Activated CD4-positive, alpha-beta memory T cell treated with anti-CD3 and anti-CD28 coated beads, Interleukin-2, amount 10 ng/mL, durations not matched to agents 7 days and 5 days (primary cell): ENCODE measurements at regions of chr19 and their contacts with region 1.

Region 1: DNA sequence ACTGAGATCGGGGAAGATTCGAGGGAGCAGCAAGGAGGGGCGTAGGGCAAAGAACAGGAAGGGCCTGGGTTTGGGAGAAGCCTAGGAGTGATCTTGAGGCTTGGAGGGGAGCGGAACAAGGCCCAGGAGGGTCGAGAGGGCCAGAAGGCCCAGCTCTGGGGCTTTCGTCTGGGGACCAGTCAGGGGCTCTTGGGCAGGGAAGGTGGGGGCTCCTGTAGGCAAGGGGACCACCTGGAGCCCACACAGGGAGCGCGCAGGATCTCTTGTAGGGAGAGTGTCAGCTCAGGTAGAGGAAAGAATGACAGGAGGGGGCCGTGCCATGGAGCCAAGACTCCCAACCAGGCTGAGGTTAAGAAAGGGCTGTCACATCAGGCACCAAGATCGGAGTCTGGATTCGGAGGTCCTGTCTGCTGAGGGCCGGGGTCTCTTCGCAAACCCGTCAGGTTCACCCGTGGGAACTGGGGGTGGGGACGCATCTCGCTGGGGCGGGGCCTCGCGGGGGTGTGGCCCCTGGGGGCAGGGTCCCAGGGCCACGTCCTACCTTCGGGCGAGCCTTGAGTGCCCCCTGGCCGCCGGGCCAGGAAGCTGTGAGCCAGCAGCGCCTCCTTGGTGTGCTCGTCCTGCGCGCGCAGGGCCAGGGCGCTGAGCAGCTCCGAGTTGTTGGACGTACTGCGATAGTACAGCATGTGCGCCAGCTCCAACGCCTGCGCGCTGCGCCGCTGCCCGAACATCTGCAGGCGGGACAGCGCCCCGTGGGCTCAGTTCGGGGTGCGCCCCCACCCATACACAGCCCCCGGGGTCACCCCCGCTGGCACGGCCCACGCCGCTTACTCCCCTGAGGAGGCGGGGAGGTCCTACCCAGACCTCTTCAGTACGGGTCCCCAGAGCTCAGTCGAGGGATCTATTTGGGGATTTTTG is 8.4 kb downstream of the EMP3 start:
- DNase-seq: peak; percentile 95
- H3K4me3 Mint-ChIP-seq: peak overlapping the region; percentile 96
- H3K27ac Mint-ChIP-seq: peak overlapping the region; percentile 95
- H3K4me1 Mint-ChIP-seq: peaks cover 53% of the 10 kb centered on the region
- H3K27me3 Mint-ChIP-seq: no peaks in the 10 kb centered on the region

Region 2: DNA sequence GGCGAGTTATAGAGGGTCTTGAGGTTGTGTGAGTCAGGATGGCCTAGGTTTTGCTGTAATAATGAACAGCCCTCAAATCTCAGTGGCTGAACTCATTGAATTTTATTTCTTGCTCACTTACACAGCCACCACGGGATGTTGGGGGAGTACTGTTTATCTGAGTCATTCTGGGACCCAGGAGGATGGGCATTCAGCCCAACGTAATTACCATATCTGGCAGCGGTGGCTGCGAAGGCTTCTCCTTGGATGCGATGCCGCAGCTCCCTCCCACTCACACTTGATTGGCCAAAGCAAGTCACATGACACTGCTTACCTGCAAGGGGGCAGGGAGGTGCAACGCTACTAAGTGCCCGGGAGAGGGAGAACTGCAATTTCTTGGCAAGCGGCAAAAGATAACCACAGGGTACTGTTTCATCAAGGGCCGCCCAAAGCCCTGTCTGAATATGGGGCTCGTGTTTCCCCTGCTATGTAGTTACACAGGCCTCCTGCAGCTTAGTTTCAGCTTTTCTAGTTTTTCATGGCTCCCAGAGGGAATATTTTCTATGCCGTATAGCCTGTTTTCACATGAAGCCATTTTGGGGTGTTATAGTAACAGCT is 143.3 kb before region 1 on chr19:
- CTCF ChIA-PET with region 1: no interaction called
- POLR2A ChIA-PET with region 1: no interaction called
- DNase-seq: peak; percentile 55
- H3K4me3 Mint-ChIP-seq: no peak overlapping the region
- H3K27ac Mint-ChIP-seq: no peak overlapping the region
- H3K4me1 Mint-ChIP-seq: peaks cover 8% of the 10 kb centered on the region
- H3K27me3 Mint-ChIP-seq: no peaks in the 10 kb centered on the region

Region 3: GRCh38 chr19:48271531-48272151 is 62.1 kb before region 1 on chr19:
- CTCF ChIA-PET with region 1: interaction called, 21 read pairs
- POLR2A ChIA-PET with region 1: interaction called, 4 read pairs
- DNase-seq: peak; percentile 24
- H3K4me3 Mint-ChIP-seq: peak overlapping the region; percentile 85
- H3K27ac Mint-ChIP-seq: peak overlapping the region; percentile 12
- H3K4me1 Mint-ChIP-seq: peaks cover 20% of the 10 kb centered on the region
- H3K27me3 Mint-ChIP-seq: peaks cover 13% of the 10 kb centered on the region

Region 4: DNA sequence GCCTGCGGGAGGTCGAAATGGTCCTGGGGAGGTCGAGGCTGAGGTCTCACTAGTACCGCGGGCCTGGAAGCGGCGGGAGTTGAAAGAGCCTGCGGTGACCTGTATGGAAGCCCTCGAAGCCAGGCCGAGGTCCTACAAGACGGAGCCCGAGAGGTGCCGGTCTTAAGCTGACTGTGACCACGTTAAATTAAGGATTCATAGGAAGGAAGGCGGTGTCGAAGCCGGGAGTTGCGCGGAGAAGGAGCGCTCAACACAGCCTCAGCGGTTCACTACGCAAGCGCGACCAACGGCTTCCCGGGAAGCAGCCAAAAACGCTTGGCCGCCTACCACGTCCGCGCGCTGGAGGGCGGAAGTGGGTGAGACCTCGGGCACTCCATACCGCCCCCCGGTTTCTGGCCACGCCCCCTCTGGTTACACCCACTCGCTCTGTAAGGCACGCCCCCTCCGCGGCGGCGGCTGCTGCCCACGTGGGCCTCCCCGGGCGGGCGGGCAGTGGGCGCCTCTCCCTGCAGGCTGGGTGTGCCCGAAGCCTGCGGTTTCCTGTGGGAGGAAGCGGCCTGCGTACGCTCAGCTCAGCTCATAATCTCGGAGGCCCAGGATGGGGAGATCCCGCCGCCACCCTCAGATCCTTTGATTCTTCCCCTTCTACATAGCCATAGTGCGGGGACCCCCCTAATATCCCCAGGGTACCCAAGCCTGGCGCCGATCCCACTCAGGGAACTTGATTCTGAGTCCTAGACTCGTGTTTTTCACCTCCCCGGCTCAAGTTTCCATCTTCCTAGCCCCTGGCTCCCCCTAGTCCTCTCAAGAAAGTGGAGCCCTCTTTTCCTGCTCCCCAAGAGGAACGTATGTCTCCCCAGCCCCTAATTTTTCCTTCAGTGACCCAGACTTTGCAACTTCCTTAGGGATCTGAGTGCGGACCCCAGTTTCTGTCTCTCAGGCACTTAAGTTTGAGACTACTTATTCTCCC is 11.8 kb before region 1 on chr19:
- CTCF ChIA-PET with region 1: interaction called, 342 read pairs
- POLR2A ChIA-PET with region 1: interaction called, 265 read pairs
- DNase-seq: peak; percentile 100
- H3K4me3 Mint-ChIP-seq: peak overlapping the region; percentile 83
- H3K27ac Mint-ChIP-seq: peak overlapping the region; percentile 98
- H3K4me1 Mint-ChIP-seq: peaks cover 58% of the 10 kb centered on the region
- H3K27me3 Mint-ChIP-seq: no peaks in the 10 kb centered on the region

Region 5: DNA sequence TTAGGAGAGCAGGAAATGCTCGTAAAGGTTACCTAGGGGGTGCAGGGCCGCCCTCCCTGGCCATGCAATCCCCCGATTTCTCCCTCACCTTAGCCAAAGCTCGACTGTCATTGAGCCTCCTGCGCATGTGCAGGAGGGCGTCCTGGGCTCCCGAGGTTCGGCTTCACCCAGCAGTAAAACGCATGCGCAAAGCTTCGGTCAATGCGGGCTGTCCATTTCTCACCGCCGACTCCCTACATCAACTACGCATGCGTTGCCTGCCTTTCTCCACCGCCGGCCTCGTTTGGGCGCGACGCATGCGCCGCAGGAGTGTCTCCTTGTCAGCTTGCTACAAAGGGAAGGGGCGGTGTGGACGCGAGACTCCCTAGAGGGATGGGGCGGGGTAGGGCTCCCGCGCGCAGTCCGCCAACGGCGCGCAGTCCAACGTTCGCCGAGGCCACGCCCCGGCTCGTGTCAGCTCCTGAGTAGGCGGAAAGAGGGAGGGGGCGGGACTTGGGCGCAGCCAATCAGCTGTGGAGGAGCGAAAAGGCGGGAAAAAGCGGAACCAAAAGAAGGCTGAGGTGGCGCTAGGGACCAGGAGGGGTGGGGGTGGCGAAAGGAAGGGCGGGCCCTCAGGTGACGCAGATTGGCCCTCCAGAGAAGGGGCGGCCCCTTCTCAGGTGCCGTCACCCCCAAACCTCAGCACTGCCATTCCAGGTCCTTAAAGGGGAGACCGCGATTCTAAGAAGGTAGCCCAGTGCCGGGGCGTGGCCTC is 30.3 kb after region 1 on chr19 and contains the starts of genes SYNGR4 and TMEM143:
- CTCF ChIA-PET with region 1: interaction called, 40 read pairs
- POLR2A ChIA-PET with region 1: interaction called, 44 read pairs
- DNase-seq: peak; percentile 99
- H3K4me3 Mint-ChIP-seq: peak within 1 kb of the TSS; percentile 82
- H3K27ac Mint-ChIP-seq: peak within 1 kb of the TSS; percentile 95
- H3K4me1 Mint-ChIP-seq: peaks cover 22% of the 10 kb centered on the region
- H3K27me3 Mint-ChIP-seq: no peaks in the 10 kb centered on the region
- total RNA-seq, gene SYNGR4: 0.28 TPM in 1 of 2 experiments, not detected in the other
- total RNA-seq, gene TMEM143: 17.4 to 18.2 TPM